Activated CD4-positive, alpha-beta memory T cell treated with anti-CD3 and anti-CD28 coated beads, Interleukin-2, amount 10 ng/mL, durations not matched to agents 7 days and 5 days (primary cell): ENCODE measurements at regions of chr6 and their contacts with region 1.

Region 1: GRCh38 chr6:42547407-42548329 is 16.2 kb upstream of the UBR2 start:
- DNase-seq: peak; percentile 88
- H3K4me3 Mint-ChIP-seq: peak overlapping the region; percentile 54
- H3K27ac Mint-ChIP-seq: peak overlapping the region; percentile 33
- H3K4me1 Mint-ChIP-seq: peaks cover 20% of the 10 kb centered on the region
- H3K27me3 Mint-ChIP-seq: peaks cover 4% of the 10 kb centered on the region

Region 2: DNA sequence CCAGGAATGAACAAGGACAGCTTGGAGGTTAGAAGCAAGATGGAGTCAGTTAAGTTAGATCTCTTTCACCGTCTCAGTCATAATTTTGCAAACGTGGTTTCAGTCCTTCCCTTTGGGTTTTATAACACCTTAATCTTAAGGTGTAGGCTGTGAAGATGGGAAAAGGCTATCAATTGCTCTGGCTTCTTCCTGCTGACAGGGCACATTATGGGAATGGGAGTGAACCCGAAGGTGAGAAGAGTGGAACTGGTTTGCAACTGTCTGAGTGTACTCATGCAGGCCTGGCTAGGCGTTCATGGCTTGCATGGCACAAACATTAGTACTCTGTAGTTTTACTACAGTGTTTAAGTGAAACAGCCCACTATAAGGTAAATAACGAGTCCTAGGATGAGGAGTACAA is 487.9 kb before region 1 on chr6:
- CTCF ChIA-PET with region 1: no interaction called
- POLR2A ChIA-PET with region 1: no interaction called
- DNase-seq: no peak
- H3K4me3 Mint-ChIP-seq: no peak overlapping the region
- H3K27ac Mint-ChIP-seq: no peak overlapping the region
- H3K4me1 Mint-ChIP-seq: peaks cover 3% of the 10 kb centered on the region
- H3K27me3 Mint-ChIP-seq: no peaks in the 10 kb centered on the region

Region 3: GRCh38 chr6:42217519-42218367 is 329.9 kb before region 1 on chr6 and contains the start of gene MRPS10:
- CTCF ChIA-PET with region 1: interaction called, 59 read pairs
- POLR2A ChIA-PET with region 1: interaction called, 8 read pairs
- DNase-seq: peak; percentile 93
- H3K4me3 Mint-ChIP-seq: peak within 1 kb of the TSS; percentile 97
- H3K27ac Mint-ChIP-seq: peak within 1 kb of the TSS; percentile 80
- H3K4me1 Mint-ChIP-seq: peaks cover 33% of the 10 kb centered on the region
- H3K27me3 Mint-ChIP-seq: no peaks in the 10 kb centered on the region
- total RNA-seq, gene MRPS10: 28.4 to 32.8 TPM

Region 4: DNA sequence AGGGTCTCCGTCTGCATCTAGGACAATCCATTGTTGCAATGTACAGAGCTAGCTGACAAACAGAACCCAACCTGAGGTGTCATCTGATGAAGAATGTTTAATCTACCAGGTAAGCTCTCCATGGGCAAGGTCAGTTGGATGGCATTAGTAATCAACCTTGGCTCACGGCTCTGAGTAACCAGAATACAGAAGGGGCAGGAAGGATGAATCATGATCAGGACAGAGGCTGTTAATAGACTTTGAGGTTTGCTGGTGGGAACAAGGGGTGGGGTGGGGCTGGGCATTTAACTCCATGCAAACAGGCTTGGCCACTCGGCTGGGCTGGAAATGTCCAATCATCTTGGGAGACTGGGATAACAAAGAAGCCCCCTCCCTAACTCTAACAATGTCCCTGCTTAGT is 252.9 kb before region 1 on chr6:
- CTCF ChIA-PET with region 1: interaction called, 18 read pairs
- POLR2A ChIA-PET with region 1: interaction called, 3 read pairs
- DNase-seq: no peak
- H3K4me3 Mint-ChIP-seq: no peak overlapping the region
- H3K27ac Mint-ChIP-seq: peak overlapping the region; percentile 55
- H3K4me1 Mint-ChIP-seq: peaks cover 59% of the 10 kb centered on the region
- H3K27me3 Mint-ChIP-seq: no peaks in the 10 kb centered on the region

Region 5: GRCh38 chr6:42390228-42390934 is 157.3 kb before region 1 on chr6:
- CTCF ChIA-PET with region 1: interaction called, 46 read pairs
- POLR2A ChIA-PET with region 1: interaction called, 8 read pairs
- DNase-seq: peak; percentile 62
- H3K4me3 Mint-ChIP-seq: peak overlapping the region; percentile 60
- H3K27ac Mint-ChIP-seq: peak overlapping the region; percentile 93
- H3K4me1 Mint-ChIP-seq: peaks cover 89% of the 10 kb centered on the region
- H3K27me3 Mint-ChIP-seq: no peaks in the 10 kb centered on the region

Region 6: DNA sequence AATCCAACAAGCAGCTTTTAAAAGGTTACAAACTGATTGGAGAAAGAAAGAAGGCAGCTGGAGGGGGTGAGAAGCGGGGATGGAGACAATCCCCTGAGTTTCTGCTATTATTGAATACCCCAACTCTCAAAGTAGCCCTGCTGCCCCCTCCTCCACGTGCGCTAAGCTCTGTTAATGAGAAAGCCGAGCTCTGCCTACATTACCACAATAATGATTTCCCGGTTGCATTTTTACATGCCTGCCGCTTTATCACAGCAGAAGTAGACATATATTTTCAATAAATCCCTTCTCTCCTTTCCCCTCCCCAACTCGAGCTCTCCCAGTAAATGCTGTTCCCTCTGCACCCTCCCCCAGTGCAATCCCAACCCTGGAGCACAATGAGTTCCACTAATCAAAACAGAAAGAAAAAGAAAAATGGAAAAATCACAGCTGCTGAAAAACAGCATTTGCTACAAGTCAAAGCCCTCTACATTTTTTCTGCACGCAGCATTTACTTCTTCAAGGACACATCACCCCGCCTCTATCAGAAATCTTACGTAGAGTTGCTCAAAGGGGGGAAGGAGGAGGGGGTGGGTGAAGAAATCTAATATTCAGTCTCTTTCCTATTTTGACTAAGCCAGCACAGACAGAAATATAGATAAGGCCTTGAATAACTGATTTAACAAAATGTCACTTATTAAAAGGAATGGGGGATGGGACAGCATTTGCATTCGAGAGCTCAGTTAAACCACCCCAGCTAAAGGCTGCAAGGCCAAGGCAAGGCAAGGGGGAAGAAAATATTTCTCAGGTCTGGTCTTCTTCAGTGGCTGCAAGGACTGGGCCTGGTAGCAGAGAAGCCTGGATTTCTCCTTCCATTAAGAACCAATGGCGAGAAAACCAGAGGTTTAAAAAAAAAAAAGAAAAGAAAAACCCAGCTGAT is 106.6 kb before region 1 on chr6:
- CTCF ChIA-PET with region 1: interaction called, 12 read pairs
- POLR2A ChIA-PET with region 1: no interaction called
- DNase-seq: no peak
- H3K4me3 Mint-ChIP-seq: peak overlapping the region; percentile 54
- H3K27ac Mint-ChIP-seq: peak overlapping the region; percentile 58
- H3K4me1 Mint-ChIP-seq: peaks cover 58% of the 10 kb centered on the region
- H3K27me3 Mint-ChIP-seq: no peaks in the 10 kb centered on the region

Region 7: DNA sequence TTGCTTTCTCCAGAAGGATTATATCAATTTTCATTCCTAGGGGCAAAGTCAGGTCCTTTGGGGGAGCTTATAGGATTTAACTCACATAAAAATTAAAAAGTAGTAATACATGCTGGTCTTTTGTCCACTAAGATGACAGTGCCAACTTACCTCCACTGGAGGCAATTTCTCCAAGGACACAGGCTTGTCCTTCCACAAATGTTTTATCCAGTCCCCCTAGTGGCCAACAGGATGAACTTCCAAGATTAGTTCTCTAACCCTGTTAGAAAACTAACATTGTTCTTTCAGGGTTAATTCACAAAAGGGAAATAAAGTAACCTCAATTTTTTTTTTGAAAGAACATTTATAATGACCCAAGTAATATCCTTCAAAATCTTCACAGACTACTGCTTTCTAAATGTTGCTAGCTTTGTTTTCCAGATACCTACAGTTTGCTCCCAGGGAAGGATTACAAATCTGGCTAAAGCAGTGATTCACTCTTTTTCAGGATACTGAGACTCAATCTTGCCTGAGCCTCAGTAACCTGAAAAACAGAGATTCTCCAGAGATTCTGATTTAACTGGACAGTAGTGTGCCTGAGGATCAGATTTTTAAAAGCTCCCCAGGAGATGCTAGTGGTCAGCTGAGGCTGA is 15.5 kb before region 1 on chr6:
- CTCF ChIA-PET with region 1: interaction called, 47 read pairs
- POLR2A ChIA-PET with region 1: no interaction called
- DNase-seq: no peak
- H3K4me3 Mint-ChIP-seq: no peak overlapping the region
- H3K27ac Mint-ChIP-seq: no peak overlapping the region
- H3K4me1 Mint-ChIP-seq: no peaks in the 10 kb centered on the region
- H3K27me3 Mint-ChIP-seq: no peaks in the 10 kb centered on the region

Region 8: GRCh38 chr6:42710316-42710715 is 162.6 kb after region 1 on chr6:
- CTCF ChIA-PET with region 1: no interaction called
- POLR2A ChIA-PET with region 1: no interaction called
- DNase-seq: no peak
- H3K4me3 Mint-ChIP-seq: no peak overlapping the region
- H3K27ac Mint-ChIP-seq: no peak overlapping the region
- H3K4me1 Mint-ChIP-seq: peaks cover 6% of the 10 kb centered on the region
- H3K27me3 Mint-ChIP-seq: no peaks in the 10 kb centered on the region

Region 9: DNA sequence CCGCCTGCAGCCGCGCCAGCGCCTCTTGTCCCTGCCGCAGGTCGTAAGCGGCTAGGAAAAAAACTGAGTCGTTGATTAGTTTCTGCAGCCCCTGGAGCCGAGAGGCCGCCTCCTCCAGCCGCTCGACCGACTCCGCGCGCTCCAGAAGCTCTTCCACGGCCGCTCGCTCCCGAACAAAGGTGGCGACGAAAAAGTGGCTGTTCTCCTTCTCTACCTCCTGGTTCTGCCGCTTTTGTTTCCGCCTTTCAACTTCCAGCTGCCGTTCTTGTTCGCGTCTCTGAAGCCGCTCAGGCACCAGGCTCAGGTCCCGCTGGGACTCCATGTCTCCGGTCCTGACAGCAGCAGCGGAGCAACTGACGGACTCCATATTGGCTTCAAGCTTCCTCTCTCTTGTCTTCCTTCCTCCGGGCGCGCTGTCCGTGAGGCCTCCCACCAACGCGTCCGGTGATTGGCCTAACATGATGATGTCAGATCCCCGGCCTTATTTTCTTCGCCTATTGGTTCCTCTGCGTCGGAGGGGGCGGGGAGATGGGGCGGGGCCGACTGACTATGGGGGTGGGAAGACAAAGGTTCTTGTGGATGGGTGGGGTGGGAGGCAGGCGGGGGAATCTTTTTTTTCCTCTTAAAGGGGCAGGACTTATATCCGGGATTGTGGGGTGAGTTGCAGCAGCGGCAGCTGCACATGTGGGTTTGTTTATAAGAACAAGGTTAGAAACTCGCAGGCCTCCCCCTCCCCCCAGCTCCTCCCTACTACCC is 198.2 kb after region 1 on chr6 and contains the start of gene TBCC:
- CTCF ChIA-PET with region 1: interaction called, 10 read pairs
- POLR2A ChIA-PET with region 1: no interaction called
- DNase-seq: peak; percentile 96
- H3K4me3 Mint-ChIP-seq: peak within 1 kb of the TSS; percentile 96
- H3K27ac Mint-ChIP-seq: peak within 1 kb of the TSS; percentile 100
- H3K4me1 Mint-ChIP-seq: peaks cover 34% of the 10 kb centered on the region
- H3K27me3 Mint-ChIP-seq: no peaks in the 10 kb centered on the region
- total RNA-seq, gene TBCC: 33.7 to 34.9 TPM

Region 10: DNA sequence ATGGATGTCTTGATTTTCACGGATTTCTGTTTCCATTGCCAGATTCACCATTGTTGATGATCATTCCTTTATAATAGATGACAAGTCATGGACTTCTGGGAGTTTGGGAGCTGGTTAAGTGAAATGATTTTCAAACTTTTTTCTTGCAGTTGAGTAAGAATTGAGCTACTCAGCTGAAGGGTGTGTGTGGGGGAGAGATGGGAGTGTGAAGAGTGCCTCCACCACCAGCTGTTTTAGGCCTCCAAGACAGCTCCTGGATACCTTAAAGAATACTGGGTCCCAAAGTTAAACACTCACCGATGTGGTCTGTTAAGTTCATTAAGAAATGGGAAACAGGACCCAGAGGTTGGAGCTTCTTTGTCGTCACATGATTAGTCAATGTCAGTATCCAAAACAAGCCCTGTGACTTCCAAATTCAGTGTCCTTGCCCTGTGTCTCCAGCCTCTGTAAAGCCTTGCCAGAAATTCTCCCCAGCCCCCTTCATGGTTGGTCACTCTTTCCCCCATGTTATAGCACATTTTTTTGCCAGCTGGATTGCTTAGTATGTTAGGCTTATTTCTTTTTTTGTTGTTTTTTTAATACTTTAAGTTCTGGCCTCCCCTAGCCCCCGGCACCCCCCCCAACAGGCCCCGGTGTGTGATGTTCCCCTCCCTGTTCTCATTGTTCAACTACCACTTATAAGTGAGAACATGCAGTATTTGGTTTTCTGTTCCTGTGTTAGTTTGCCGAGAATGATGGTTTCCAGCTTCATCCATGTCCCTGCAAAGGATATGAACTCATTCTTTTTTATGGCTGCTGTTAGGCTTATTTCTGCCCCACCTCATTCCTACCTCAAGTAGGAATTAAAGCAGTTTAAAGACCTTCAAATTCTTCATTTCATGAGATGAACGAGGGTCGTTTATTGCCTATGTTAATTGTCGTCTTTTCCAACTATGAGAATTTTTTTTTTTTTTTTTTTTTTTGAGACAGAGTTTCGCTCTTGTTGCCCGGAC is 261.1 kb after region 1 on chr6:
- CTCF ChIA-PET with region 1: no interaction called
- POLR2A ChIA-PET with region 1: no interaction called
- DNase-seq: no peak
- H3K4me3 Mint-ChIP-seq: no peak overlapping the region
- H3K27ac Mint-ChIP-seq: no peak overlapping the region
- H3K4me1 Mint-ChIP-seq: peaks cover 1% of the 10 kb centered on the region
- H3K27me3 Mint-ChIP-seq: no peaks in the 10 kb centered on the region